GM12878 (cell line): ENCODE measurements at regions of chr6 and their contacts with region 1.

Region 1: DNA sequence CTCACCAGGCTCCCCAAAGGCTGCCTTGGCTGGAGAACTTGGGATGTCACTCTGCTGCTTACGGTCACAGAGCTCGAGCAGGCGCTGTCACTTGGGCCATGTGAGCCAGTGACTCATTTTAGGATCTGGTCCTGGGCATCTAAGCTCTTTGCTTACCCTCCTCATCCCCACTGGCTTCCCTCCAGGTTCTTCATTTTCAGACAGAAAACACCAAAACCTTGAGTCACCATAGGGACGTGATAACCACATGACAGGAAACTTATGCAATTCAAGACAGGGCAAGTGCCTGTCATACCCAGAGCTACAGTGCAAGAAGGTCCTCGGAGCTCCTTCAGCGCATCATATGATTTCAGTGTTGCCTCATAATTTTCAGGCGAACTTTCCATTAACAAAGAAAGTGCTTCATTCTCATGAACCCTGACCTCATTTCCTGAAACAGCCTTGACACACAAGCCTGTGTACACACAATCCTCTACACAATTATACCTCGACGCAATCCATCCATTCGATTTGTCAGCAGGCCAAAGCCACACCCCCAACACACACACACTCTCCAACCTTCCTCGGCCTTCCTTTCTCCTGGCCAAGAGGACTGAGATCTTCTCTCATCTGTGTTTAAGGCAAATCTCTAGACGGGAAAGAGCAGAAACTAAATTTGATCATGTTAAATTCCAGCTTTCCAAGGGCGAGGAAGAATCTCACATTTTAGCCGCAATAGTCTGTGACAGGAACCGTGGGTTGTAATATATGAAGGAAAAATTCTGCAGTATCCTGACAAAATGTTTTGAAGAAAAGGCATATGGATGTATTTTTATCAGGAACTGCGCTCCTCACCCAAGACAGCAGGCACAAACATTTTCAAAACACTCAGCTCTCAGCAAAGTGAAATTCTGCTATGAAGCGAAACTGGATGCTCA is 25.3 kb downstream of the TBC1D7 start:
- DNase-seq: peak; percentile 90
- ATAC-seq: peak; percentile 86
- H3K4me3 ChIP-seq: peak overlapping the region; percentile 34
- H3K27ac ChIP-seq: peak overlapping the region; percentile 90
- H3K4me1 ChIP-seq: peaks cover 33% of the 10 kb centered on the region
- H3K27me3 ChIP-seq: no peaks in the 10 kb centered on the region
- CTCF ChIP-seq: no peak
- EP300 ChIP-seq: peak in 1 of 2 experiments; percentile 74; a peak in 3 of 4 replicates
- POLR2A ChIP-seq: no peak; the same call in 1 of the 2 replicates
- RAD21 ChIP-seq: no peak

Region 2: DNA sequence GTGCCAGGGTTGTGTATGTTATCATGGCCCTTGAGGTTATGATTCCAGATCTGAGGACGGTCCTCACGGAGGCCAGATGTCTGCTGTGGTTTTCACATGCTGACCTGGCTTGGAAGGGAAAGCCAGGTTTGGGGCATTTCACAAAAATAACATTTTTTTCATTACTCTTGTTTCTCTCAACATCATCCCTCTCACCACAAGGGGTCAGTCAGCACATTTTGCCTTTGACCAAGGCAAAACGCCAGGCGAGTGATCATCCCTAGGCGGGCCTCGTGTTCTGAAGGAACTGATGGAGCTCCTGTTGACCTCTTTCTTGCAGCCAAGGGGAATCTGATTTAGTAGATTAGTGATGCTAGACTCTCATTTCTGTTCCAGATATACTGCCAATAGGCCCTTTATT is 108.2 kb before region 1 on chr6:
- CTCF ChIA-PET with region 1: interaction called, 19 read pairs
- POLR2A ChIA-PET with region 1: no interaction called
- RAD21 ChIA-PET with region 1: interaction called, 33 read pairs
- SMC1A ChIA-PET with region 1: interaction called, 23 read pairs
- in situ Hi-C with region 1: no loop called
- intact Hi-C with region 1: no loop called
- DNase-seq: no peak
- ATAC-seq: peak; percentile 89
- H3K4me3 ChIP-seq: no peak overlapping the region
- H3K27ac ChIP-seq: no peak overlapping the region
- H3K4me1 ChIP-seq: no peaks in the 10 kb centered on the region
- H3K27me3 ChIP-seq: peaks cover 1 to 10% of the 10 kb centered on the region in 2 experiments; a peak in 3 of 4 replicates
- CTCF ChIP-seq: peak; percentile 68 to 76 (median 75)
- EP300 ChIP-seq: no peak
- POLR2A ChIP-seq: no peak
- RAD21 ChIP-seq: peak; percentile 92

Region 3: GRCh38 chr6:13217206-13217905 is 85.7 kb before region 1 on chr6:
- CTCF ChIA-PET with region 1: no interaction called
- POLR2A ChIA-PET with region 1: interaction called, 3 read pairs
- RAD21 ChIA-PET with region 1: interaction called, 5 read pairs
- SMC1A ChIA-PET with region 1: interaction called, 12 read pairs
- in situ Hi-C with region 1: no loop called
- intact Hi-C with region 1: no loop called
- DNase-seq: no peak
- ATAC-seq: peak; percentile 84
- H3K4me3 ChIP-seq: no peak overlapping the region
- H3K27ac ChIP-seq: no peak overlapping the region
- H3K4me1 ChIP-seq: 0 out of 2 replicates have a peak, but pooled peaks cover 4% of the 10 kb centered on the region
- H3K27me3 ChIP-seq: no peaks in the 10 kb centered on the region; a peak in 1 of 4 replicates
- CTCF ChIP-seq: no peak
- EP300 ChIP-seq: no peak
- POLR2A ChIP-seq: no peak
- RAD21 ChIP-seq: no peak

Region 4: DNA sequence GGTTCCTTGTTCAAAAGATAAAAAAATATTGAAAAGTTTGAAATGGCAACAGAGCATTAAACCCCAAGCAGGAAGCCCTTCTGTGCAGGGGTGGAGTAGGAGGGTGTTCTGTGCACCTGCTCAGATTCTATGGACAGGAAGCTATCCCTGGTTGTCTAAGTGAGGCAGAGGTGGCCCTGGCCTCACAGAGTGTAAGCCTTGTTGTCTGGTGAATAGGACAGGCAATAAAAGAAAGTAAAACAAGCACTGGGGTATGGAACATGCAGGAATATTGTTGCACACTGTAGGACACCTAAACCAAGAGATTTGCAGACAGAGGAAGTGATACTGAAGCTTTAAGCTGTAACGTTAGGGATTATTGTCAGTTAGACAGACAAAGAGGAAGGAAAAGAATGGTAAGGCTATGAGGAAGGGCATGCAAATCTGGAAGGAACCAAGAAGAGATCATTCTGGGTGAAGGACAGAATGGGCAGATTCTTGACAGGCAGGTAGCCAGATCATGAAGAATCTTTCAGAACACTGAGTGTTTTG is 41.5 kb before region 1 on chr6:
- CTCF ChIA-PET with region 1: interaction called, 4 read pairs
- POLR2A ChIA-PET with region 1: interaction called, 22 read pairs
- RAD21 ChIA-PET with region 1: interaction called, 36 read pairs
- SMC1A ChIA-PET with region 1: interaction called, 38 read pairs
- in situ Hi-C with region 1: no loop called
- intact Hi-C with region 1: no loop called
- DNase-seq: peak; percentile 80
- ATAC-seq: peak; percentile 57
- H3K4me3 ChIP-seq: peak overlapping the region; percentile 52; the same call in 1 of the 2 replicates
- H3K27ac ChIP-seq: peak overlapping the region; percentile 50
- H3K4me1 ChIP-seq: peaks cover 59% of the 10 kb centered on the region
- H3K27me3 ChIP-seq: no peaks in the 10 kb centered on the region
- CTCF ChIP-seq: no peak
- EP300 ChIP-seq: peak in 1 of 2 experiments; percentile 63; a peak in 1 of 4 replicates
- POLR2A ChIP-seq: peak; percentile 7; the same call in 1 of the 2 replicates
- RAD21 ChIP-seq: no peak; the same call in 1 of the 2 replicates

Region 5: GRCh38 chr6:13272131-13273046 is 30.6 kb before region 1 on chr6:
- CTCF ChIA-PET with region 1: interaction called, 15 read pairs
- POLR2A ChIA-PET with region 1: interaction called, 37 read pairs
- RAD21 ChIA-PET with region 1: interaction called, 79 read pairs
- SMC1A ChIA-PET with region 1: interaction called, 114 read pairs
- in situ Hi-C with region 1: no loop called
- intact Hi-C with region 1: loop called (anchors 1 kb)
- DNase-seq: peak; percentile 67
- ATAC-seq: peak; percentile 72
- H3K4me3 ChIP-seq: peak overlapping the region; percentile 82
- H3K27ac ChIP-seq: peak overlapping the region; percentile 92
- H3K4me1 ChIP-seq: peaks cover 20% of the 10 kb centered on the region
- H3K27me3 ChIP-seq: no peaks in the 10 kb centered on the region; a peak in 1 of 4 replicates
- CTCF ChIP-seq: peak in 2 of 3 experiments; percentile 20 to 37; a peak in 3 of 6 replicates
- EP300 ChIP-seq: peak; percentile 53 to 72; a peak in 1 of 4 replicates
- POLR2A ChIP-seq: peak; percentile 86
- RAD21 ChIP-seq: peak; percentile 44; the same call in 1 of the 2 replicates

Region 6: GRCh38 chr6:13277836-13278563 is 25.0 kb before region 1 on chr6:
- CTCF ChIA-PET with region 1: interaction called, 15 read pairs
- POLR2A ChIA-PET with region 1: interaction called, 37 read pairs
- RAD21 ChIA-PET with region 1: interaction called, 79 read pairs
- SMC1A ChIA-PET with region 1: interaction called, 114 read pairs
- in situ Hi-C with region 1: no loop called
- intact Hi-C with region 1: loop called (anchors 1 kb)
- DNase-seq: no peak
- ATAC-seq: peak; percentile 53
- H3K4me3 ChIP-seq: no peak overlapping the region
- H3K27ac ChIP-seq: no peak overlapping the region
- H3K4me1 ChIP-seq: peaks cover 33% of the 10 kb centered on the region
- H3K27me3 ChIP-seq: no peaks in the 10 kb centered on the region; a peak in 1 of 4 replicates
- CTCF ChIP-seq: peak; percentile 57 to 69 (median 58)
- EP300 ChIP-seq: no peak
- POLR2A ChIP-seq: no peak
- RAD21 ChIP-seq: peak; percentile 58

Region 7: DNA sequence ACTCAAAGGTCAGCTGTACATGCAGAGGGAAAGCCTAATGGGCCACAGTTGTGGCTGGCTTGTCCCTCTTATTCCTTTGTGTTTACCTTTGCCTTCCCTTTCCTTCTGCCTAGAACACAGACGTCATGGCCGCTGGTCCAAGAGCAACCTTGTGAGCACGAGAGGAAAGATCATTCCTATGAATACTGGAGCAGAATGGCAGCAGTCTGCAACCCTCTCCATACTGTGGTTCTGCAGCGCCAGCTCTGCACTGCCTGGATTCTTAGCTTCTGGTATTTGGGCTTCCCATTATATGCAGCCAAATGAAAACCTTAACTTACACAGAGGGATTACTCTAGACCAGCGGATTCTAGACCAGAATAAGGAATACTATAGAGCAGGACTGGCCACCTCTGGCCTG is 12.9 kb after region 1 on chr6:
- CTCF ChIA-PET with region 1: interaction called, 4 read pairs
- POLR2A ChIA-PET with region 1: no interaction called
- RAD21 ChIA-PET with region 1: interaction called, 4 read pairs
- SMC1A ChIA-PET with region 1: interaction called, 13 read pairs
- in situ Hi-C with region 1: no loop called
- intact Hi-C with region 1: no loop called
- DNase-seq: no peak
- ATAC-seq: no peak
- H3K4me3 ChIP-seq: no peak overlapping the region
- H3K27ac ChIP-seq: no peak overlapping the region
- H3K4me1 ChIP-seq: no peaks in the 10 kb centered on the region
- H3K27me3 ChIP-seq: no peaks in the 10 kb centered on the region
- CTCF ChIP-seq: no peak
- EP300 ChIP-seq: no peak
- POLR2A ChIP-seq: no peak
- RAD21 ChIP-seq: no peak